B cell (primary cell): ENCODE measurements at regions of chrX and their contacts with region 1.

Region 1: GRCh38 chrX:9312922-9313867 is 151.7 kb upstream of the TBL1X start:
- DNase-seq: peak; percentile 58
- ATAC-seq: peak; percentile 72
- H3K4me3 ChIP-seq: no peak overlapping the region
- H3K4me3 Mint-ChIP-seq: peak overlapping the region; percentile 23
- H3K27ac ChIP-seq: no peak overlapping the region
- H3K27ac Mint-ChIP-seq: peak overlapping the region; percentile 6
- H3K4me1 ChIP-seq: peaks cover 12 to 17% of the 10 kb centered on the region in 2 donors
- H3K4me1 Mint-ChIP-seq: peaks cover 20% of the 10 kb centered on the region
- H3K27me3 ChIP-seq: no peaks in the 10 kb centered on the region
- H3K27me3 Mint-ChIP-seq: no peaks in the 10 kb centered on the region
- CTCF ChIP-seq: peak; percentile 62

Region 2: GRCh38 chrX:8971116-8971515 is 342.1 kb before region 1 on chrX:
- CTCF ChIA-PET with region 1: no interaction called
- POLR2A ChIA-PET with region 1: no interaction called
- intact Hi-C with region 1: loop called (anchors 5 kb)
- DNase-seq: peak; percentile 53
- ATAC-seq: peak; percentile 47
- H3K4me3 ChIP-seq: no peak overlapping the region
- H3K4me3 Mint-ChIP-seq: no peak overlapping the region
- H3K27ac ChIP-seq: no peak overlapping the region
- H3K27ac Mint-ChIP-seq: no peak overlapping the region
- H3K4me1 ChIP-seq: no peaks in the 10 kb centered on the region
- H3K4me1 Mint-ChIP-seq: no peaks in the 10 kb centered on the region
- H3K27me3 ChIP-seq: peaks cover 0 to 2% (median 0%) of the 10 kb centered on the region in 4 experiments
- H3K27me3 Mint-ChIP-seq: peaks cover 6% of the 10 kb centered on the region
- CTCF ChIP-seq: peak; percentile 35

Region 3: GRCh38 chrX:9279234-9279544 is 34.0 kb before region 1 on chrX:
- CTCF ChIA-PET with region 1: no interaction called
- POLR2A ChIA-PET with region 1: no interaction called
- intact Hi-C with region 1: no loop called
- DNase-seq: no peak
- ATAC-seq: no peak
- H3K4me3 ChIP-seq: no peak overlapping the region
- H3K4me3 Mint-ChIP-seq: no peak overlapping the region
- H3K27ac ChIP-seq: no peak overlapping the region
- H3K27ac Mint-ChIP-seq: no peak overlapping the region
- H3K4me1 ChIP-seq: no peaks in the 10 kb centered on the region
- H3K4me1 Mint-ChIP-seq: peaks cover 7% of the 10 kb centered on the region
- H3K27me3 ChIP-seq: no peaks in the 10 kb centered on the region
- H3K27me3 Mint-ChIP-seq: no peaks in the 10 kb centered on the region
- CTCF ChIP-seq: no peak

Region 4: GRCh38 chrX:9327748-9328147 is 14.6 kb after region 1 on chrX:
- CTCF ChIA-PET with region 1: no interaction called
- POLR2A ChIA-PET with region 1: no interaction called
- intact Hi-C with region 1: no loop called
- DNase-seq: no peak
- ATAC-seq: no peak
- H3K4me3 ChIP-seq: no peak overlapping the region
- H3K4me3 Mint-ChIP-seq: no peak overlapping the region
- H3K27ac ChIP-seq: no peak overlapping the region
- H3K27ac Mint-ChIP-seq: no peak overlapping the region
- H3K4me1 ChIP-seq: no peaks in the 10 kb centered on the region
- H3K4me1 Mint-ChIP-seq: peaks cover 13% of the 10 kb centered on the region
- H3K27me3 ChIP-seq: no peaks in the 10 kb centered on the region
- H3K27me3 Mint-ChIP-seq: peaks cover 3% of the 10 kb centered on the region
- CTCF ChIP-seq: no peak